KBM-7 (cell line): ENCODE measurements at regions of chr15 and their contacts with region 1.

Region 1: DNA sequence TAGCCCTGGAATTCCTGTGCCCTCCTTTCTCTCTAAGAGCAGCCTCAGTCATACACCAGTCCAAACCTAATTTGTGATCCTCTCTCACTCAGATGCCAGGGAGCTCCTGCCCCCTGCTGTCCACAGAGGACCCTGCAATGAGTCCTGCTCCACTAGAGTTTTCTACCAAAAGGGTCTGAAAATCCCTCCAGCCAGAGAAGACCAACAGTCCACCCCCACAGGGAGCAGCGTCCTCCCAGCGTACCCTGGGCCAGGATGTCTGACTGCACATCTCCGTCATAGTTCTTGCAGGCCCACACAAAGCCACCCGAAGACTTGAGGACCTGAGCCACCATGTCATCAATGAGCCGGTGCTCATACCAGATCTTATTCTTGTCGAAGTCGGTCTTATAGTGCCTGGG is 15.4 kb downstream of the IDH2 start:
- DNase-seq: peak; percentile 69

Region 2: GRCh38 chr15:89750560-89751542 is 336.0 kb before region 1 on chr15 and contains the start of gene MESP1:
- in situ Hi-C with region 1: loop called (anchors 25 kb)
- DNase-seq: peak; percentile 92

Region 3: DNA sequence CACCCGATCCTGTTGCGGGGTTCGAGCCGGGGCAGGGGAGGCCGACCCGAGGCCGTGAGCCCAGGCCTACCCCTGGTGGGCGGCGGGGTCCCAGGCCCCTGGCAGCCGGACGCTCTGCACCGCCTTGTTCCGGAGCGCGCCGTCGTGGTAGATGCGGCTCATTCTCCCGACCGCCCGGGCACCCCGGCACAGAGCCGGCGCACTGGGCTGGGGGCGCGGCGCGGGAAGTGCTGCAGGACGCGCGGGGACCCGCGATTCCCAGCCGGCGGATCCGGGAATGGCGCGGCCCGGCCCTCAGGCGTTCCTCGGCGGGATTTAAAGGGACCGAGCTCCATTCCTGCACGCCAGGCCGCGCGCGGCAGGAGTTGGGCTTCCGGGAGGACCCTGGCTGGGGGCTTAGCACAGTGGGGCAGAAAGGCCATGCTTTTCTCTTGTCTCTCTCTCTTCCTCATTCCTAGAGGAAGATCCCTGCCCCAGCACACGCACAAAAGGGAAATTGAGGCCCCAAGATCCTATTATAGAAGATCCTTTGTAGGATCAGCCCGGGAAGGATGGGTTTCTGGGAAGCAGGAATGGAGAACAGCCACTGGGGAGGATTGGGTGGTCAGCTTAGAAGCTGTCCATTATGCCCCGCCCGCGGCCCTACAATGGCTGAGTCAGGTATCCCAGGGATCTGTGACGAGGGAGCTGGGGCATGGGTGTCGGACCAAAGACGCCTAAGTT is 174.0 kb before region 1 on chr15 and contains the start of gene ARPIN:
- in situ Hi-C with region 1: loop called (anchors 25 kb)
- DNase-seq: no peak

Region 4: GRCh38 chr15:90512981-90513380 is 426.1 kb after region 1 on chr15:
- in situ Hi-C with region 1: no loop called
- DNase-seq: peak; percentile 74